GM12878 (cell line): ENCODE measurements at regions of chr2 and their contacts with region 1.

Region 1: DNA sequence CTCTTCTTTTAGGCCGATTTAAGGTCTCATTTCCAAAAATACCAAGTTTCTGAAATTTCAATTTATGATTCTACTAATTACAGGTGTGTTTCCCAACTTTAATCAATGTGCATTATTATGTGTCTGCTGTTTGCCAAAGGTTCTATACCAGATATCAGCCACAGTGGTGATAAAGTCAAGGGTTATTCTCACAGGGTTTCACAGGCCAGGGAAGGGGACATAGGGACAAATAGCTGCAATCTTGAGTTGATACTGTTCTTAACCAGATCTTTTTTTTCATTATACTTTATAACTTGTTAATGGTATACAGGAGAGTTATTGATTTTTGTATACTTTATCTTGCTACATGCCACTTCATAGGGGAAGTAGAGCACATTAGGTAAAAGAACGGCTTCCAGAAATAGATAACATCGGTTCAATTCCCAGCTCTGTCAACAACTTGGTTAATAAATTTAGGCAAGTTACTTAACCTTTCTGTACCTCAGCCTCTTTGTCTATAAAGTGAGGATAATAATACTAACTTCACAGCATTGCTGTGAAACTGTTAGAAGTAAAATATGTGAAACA is 28.9 kb downstream of the RBM44 start:
- DNase-seq: no peak
- ATAC-seq: no peak
- H3K4me3 ChIP-seq: no peak overlapping the region
- H3K27ac ChIP-seq: no peak overlapping the region
- H3K4me1 ChIP-seq: no peaks in the 10 kb centered on the region
- H3K27me3 ChIP-seq: no peaks in the 10 kb centered on the region
- CTCF ChIP-seq: no peak
- EP300 ChIP-seq: no peak
- POLR2A ChIP-seq: no peak
- RAD21 ChIP-seq: no peak

Region 2: GRCh38 chr2:237758185-237758584 is 69.3 kb before region 1 on chr2:
- CTCF ChIA-PET with region 1: no interaction called
- POLR2A ChIA-PET with region 1: no interaction called
- RAD21 ChIA-PET with region 1: no interaction called
- SMC1A ChIA-PET with region 1: no interaction called
- in situ Hi-C with region 1: no loop called
- intact Hi-C with region 1: no loop called
- DNase-seq: no peak
- ATAC-seq: no peak
- H3K4me3 ChIP-seq: no peak overlapping the region
- H3K27ac ChIP-seq: no peak overlapping the region
- H3K4me1 ChIP-seq: peaks cover 5% of the 10 kb centered on the region
- H3K27me3 ChIP-seq: no peaks in the 10 kb centered on the region
- CTCF ChIP-seq: no peak
- EP300 ChIP-seq: no peak
- POLR2A ChIP-seq: no peak
- RAD21 ChIP-seq: no peak

Region 3: GRCh38 chr2:237815637-237816036 is 11.9 kb before region 1 on chr2:
- CTCF ChIA-PET with region 1: interaction called, 3 read pairs
- POLR2A ChIA-PET with region 1: interaction called, 3 read pairs
- RAD21 ChIA-PET with region 1: interaction called, 6 read pairs
- SMC1A ChIA-PET with region 1: interaction called, 10 read pairs
- in situ Hi-C with region 1: no loop called
- intact Hi-C with region 1: no loop called
- DNase-seq: peak; percentile 45
- ATAC-seq: peak; percentile 96
- H3K4me3 ChIP-seq: no peak overlapping the region
- H3K27ac ChIP-seq: no peak overlapping the region
- H3K4me1 ChIP-seq: no peaks in the 10 kb centered on the region; the same call in 1 of the 2 replicates
- H3K27me3 ChIP-seq: no peaks in the 10 kb centered on the region
- CTCF ChIP-seq: no peak
- EP300 ChIP-seq: no peak
- POLR2A ChIP-seq: no peak
- RAD21 ChIP-seq: no peak

Region 4: GRCh38 chr2:237882510-237883481 is 55.3 kb after region 1 on chr2:
- CTCF ChIA-PET with region 1: no interaction called
- POLR2A ChIA-PET with region 1: no interaction called
- RAD21 ChIA-PET with region 1: no interaction called
- SMC1A ChIA-PET with region 1: no interaction called
- in situ Hi-C with region 1: no loop called
- intact Hi-C with region 1: no loop called
- DNase-seq: no peak
- ATAC-seq: no peak
- H3K4me3 ChIP-seq: no peak overlapping the region
- H3K27ac ChIP-seq: no peak overlapping the region
- H3K4me1 ChIP-seq: no peaks in the 10 kb centered on the region
- H3K27me3 ChIP-seq: no peaks in the 10 kb centered on the region
- CTCF ChIP-seq: no peak
- EP300 ChIP-seq: no peak
- POLR2A ChIP-seq: no peak
- RAD21 ChIP-seq: no peak